ENCODE measurements at regions of chr19 and their contacts with region 1.

Region 1: GRCh38 chr19:37779127-37780005 is at the start of gene ZNF573:
- DNase-seq: peak; percentile 91
- H3K4me3 ChIP-seq: peak within 1 kb of the TSS; percentile 94
- H3K27ac ChIP-seq: peak within 1 kb of the TSS; percentile 44
- H3K4me1 ChIP-seq: peaks cover 10% of the 10 kb centered on the region
- CTCF ChIP-seq: peak; percentile 45
- total RNA-seq, gene ZNF573: 7.6 and 10.6 TPM in 2 replicates

Region 2: DNA sequence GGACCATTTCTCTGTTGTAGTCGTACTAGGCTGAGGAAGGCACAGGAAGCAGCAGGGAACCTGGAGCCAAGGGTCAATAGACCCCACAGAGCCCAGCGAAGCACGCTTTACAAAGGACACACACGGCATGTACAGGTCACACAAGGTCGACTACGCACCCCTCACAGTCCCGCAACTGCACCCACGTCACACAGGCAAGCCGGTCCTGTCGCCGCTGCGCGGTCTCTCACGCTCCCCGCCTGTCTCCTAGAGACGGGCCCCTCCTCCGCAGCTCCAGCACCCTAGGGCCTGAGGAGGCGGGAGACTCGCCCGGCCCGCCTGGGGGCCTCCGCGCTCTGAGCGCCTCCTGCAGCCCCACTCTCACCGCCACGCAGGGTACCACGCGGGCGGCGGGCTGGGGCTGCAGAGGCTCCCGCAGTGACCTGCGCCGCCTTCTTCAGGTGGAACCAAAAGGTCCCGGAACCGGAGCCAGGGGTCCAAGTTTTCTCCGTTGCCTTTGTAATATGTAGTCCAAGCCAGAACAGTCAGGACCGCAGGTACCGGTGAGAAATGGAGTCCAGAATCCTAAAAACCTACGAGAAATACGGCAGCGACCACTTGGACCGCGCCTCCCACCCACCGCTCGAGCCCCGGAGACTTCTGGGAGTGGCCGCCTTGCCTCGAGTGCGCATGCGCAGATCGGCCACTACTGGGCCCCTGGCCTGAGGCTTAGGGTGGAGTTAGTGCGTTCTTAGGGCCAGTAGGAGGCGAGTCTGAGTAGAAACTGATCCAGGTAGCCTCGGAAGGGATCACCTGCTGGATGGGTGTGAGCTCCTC is 60.0 kb before region 1 on chr19 and contains the start of gene ZNF607:
- CTCF ChIA-PET with region 1: interaction called, 4 read pairs
- POLR2A ChIA-PET with region 1: interaction called, 5 read pairs
- intact Hi-C with region 1: loop called (anchors 5 kb)
- DNase-seq: peak; percentile 96
- H3K4me3 ChIP-seq: peak within 1 kb of the TSS; percentile 80
- H3K27ac ChIP-seq: peak within 1 kb of the TSS; percentile 9
- H3K4me1 ChIP-seq: peaks cover 9% of the 10 kb centered on the region
- CTCF ChIP-seq: peak; percentile 78
- total RNA-seq, gene ZNF607: 5.5 and 6.3 TPM in 2 replicates

Measured in OCI-LY7 (cell line).